Endothelial cell of umbilical vein (primary cell): ENCODE measurements at regions of chr11 and their contacts with region 1.

Region 1: GRCh38 chr11:59753650-59754493 is 1.3 kb upstream of the STX3 start:
- DNase-seq: peak; percentile 82
- H3K4me3 ChIP-seq: peak overlapping the region; percentile 65 to 87 (median 83)
- H3K27ac ChIP-seq: peak overlapping the region; percentile 72
- H3K4me1 ChIP-seq: peaks cover 21% of the 10 kb centered on the region
- H3K27me3 ChIP-seq: no peaks in the 10 kb centered on the region
- CTCF ChIP-seq: peak; percentile 82 to 89
- POLR2A ChIP-seq: no peak

Region 2: DNA sequence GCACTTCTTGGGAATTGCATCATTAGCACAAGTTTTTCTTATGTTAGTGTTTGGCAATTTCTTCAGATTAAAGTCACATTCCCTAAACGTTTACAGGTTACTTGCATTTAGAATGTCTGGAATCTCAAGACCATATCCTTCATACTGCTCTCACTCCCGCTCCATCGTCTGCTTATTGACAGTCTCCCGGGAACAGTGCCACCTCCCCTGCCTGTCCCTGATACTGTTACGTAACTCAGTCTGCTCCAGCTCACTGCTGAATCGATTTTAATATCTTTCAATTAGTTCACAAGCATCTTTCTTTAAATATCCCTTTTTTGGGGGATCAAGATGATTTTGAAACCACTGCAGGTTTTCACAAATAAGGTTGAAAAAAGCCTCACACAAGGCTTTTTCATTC is 957.5 kb before region 1 on chr11:
- CTCF ChIA-PET with region 1: no interaction called
- POLR2A ChIA-PET with region 1: no interaction called
- dilution Hi-C with region 1: no loop called
- intact Hi-C with region 1: no loop called
- DNase-seq: no peak
- H3K4me3 ChIP-seq: no peak overlapping the region
- H3K27ac ChIP-seq: no peak overlapping the region
- H3K4me1 ChIP-seq: no peaks in the 10 kb centered on the region
- H3K27me3 ChIP-seq: no peaks in the 10 kb centered on the region
- CTCF ChIP-seq: no peak
- POLR2A ChIP-seq: no peak

Region 3: DNA sequence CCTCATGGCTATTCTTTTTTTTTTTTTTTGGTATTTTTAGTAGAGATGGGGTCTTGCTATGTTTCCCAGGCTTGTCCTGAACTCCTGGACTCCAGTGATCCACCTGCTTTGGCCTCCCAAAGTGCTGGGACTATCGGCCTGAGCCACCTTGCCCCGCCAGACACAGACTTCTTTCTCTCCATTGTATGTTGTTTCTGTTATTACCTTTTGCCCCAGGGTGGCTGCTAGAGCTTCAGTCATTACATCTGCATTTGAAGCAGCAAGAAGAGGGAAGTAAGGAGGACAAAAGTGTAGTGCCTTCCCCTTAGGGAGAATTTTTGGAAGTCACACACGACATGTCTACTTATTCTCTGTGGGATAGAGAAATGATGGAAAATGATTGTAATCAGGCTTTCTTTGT is 128.2 kb before region 1 on chr11:
- CTCF ChIA-PET with region 1: no interaction called
- POLR2A ChIA-PET with region 1: no interaction called
- dilution Hi-C with region 1: no loop called
- intact Hi-C with region 1: no loop called
- DNase-seq: no peak
- H3K4me3 ChIP-seq: no peak overlapping the region
- H3K27ac ChIP-seq: no peak overlapping the region
- H3K4me1 ChIP-seq: no peaks in the 10 kb centered on the region
- H3K27me3 ChIP-seq: no peaks in the 10 kb centered on the region
- CTCF ChIP-seq: no peak
- POLR2A ChIP-seq: no peak

Region 4: DNA sequence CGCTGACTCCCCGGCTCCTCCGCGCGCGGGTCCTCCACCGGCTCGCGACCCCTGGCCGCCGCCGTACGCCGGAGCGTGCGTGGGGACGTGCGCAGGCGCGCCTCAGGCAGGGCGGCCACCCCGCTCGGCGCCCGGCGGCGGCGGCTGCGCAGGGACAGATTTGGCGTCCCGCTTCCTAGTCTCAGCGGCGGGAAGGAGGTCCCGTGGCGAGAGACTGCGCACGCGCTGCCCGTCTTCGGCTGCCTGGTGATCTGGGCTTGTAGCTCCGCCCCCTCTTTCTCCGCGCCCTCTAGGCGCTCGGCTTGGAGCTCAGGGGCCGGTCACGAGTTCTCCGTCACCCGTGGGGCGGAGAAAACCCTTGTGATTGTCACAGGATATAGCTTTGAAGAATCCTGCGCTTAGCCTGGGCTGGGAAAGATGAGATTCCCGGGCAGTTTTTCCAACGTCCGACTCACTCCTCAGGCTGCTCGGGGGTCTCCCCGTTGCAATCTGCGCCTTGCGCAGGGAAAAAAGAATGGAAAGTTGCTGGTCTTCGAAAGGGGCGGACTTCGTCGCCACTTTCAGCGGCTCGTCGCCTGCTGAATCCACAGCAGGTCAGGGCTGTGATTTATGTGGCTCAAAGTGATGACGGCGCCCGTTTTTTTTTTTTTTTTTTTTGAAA is 84.8 kb before region 1 on chr11 and contains the start of gene PATL1:
- CTCF ChIA-PET with region 1: interaction called, 8 read pairs
- POLR2A ChIA-PET with region 1: interaction called, 11 read pairs
- dilution Hi-C with region 1: no loop called
- intact Hi-C with region 1: loop called (anchors 1 kb)
- DNase-seq: peak; percentile 99
- H3K4me3 ChIP-seq: peak within 1 kb of the TSS; percentile 82 to 86 (median 82)
- H3K27ac ChIP-seq: peak within 1 kb of the TSS; percentile 97
- H3K4me1 ChIP-seq: peaks cover 18% of the 10 kb centered on the region
- H3K27me3 ChIP-seq: no peaks in the 10 kb centered on the region
- CTCF ChIP-seq: no peak
- POLR2A ChIP-seq: peak; percentile 95
- total RNA-seq, gene PATL1: 33.1 and 38.8 TPM in 2 replicates

Region 5: DNA sequence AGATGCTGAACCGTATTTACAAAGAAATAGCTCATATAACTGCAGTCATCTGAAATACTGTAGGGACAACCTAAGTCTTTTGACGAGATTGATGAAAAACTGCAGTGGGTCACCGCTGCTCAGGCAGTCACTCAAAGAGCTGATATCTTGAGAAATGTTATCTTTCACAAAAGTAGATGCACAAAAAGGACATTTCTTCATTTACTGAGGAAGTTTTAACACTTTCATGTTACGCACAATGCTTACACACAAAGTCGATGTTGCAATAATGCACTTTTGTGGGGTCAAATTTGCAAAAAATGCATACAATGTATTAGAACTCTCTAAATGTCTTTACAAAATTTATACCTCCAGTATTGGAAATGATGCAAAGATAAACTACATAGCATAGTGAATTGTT is 24.0 kb before region 1 on chr11:
- CTCF ChIA-PET with region 1: no interaction called
- POLR2A ChIA-PET with region 1: no interaction called
- dilution Hi-C with region 1: no loop called
- intact Hi-C with region 1: no loop called
- DNase-seq: no peak
- H3K4me3 ChIP-seq: no peak overlapping the region
- H3K27ac ChIP-seq: no peak overlapping the region
- H3K4me1 ChIP-seq: peaks cover 2% of the 10 kb centered on the region
- H3K27me3 ChIP-seq: no peaks in the 10 kb centered on the region
- CTCF ChIP-seq: no peak
- POLR2A ChIP-seq: no peak

Region 6: DNA sequence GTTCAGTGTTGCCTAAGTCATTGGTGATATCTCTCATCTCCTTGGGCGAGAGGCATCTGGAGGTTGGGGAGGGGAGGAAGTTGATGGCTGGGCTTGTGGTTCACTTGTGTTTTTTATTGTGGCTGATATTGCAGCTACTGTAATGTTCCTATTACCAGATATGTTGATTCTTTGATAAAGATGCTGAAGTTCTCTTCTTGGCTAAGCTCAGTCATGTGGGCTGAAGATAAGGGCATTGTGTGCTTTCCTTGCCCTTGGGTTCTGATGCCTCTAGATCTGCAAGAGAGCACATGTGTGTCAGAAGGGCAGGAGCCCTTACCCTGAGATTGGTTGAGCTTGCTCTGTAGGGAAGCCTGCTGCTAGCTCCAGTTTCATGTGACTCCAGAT is 13.3 kb after region 1 on chr11:
- CTCF ChIA-PET with region 1: interaction called, 19 read pairs
- POLR2A ChIA-PET with region 1: interaction called, 4 read pairs
- dilution Hi-C with region 1: no loop called
- intact Hi-C with region 1: no loop called
- DNase-seq: no peak
- H3K4me3 ChIP-seq: no peak overlapping the region
- H3K27ac ChIP-seq: no peak overlapping the region
- H3K4me1 ChIP-seq: peaks cover 9% of the 10 kb centered on the region
- H3K27me3 ChIP-seq: no peaks in the 10 kb centered on the region
- CTCF ChIP-seq: no peak
- POLR2A ChIP-seq: no peak

Region 7: DNA sequence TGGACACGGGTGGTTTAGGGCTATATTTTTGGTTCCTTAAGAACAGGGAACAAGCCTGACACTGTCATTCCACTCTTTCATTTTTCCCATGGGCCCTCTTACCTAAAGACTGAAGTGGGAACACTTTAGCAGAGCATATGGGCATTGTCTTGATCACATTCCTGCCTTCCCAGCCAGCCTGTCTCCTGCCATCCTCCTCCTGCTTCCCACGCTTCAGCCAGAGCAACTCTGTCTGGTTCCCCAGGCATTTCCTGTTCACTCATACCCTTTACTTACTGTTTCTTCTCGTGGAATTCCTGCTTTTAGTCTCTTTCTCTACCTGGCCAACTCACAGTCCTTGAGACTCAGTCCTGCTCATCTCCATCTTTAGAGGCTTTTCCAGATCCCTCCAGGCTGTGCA is 33.9 kb after region 1 on chr11:
- CTCF ChIA-PET with region 1: interaction called, 16 read pairs
- POLR2A ChIA-PET with region 1: interaction called, 6 read pairs
- dilution Hi-C with region 1: no loop called
- intact Hi-C with region 1: loop called (anchors 1 kb)
- DNase-seq: peak; percentile 84
- H3K4me3 ChIP-seq: no peak overlapping the region
- H3K27ac ChIP-seq: peak overlapping the region; percentile 86
- H3K4me1 ChIP-seq: peaks cover 27% of the 10 kb centered on the region
- H3K27me3 ChIP-seq: no peaks in the 10 kb centered on the region
- CTCF ChIP-seq: no peak
- POLR2A ChIP-seq: no peak

Region 8: DNA sequence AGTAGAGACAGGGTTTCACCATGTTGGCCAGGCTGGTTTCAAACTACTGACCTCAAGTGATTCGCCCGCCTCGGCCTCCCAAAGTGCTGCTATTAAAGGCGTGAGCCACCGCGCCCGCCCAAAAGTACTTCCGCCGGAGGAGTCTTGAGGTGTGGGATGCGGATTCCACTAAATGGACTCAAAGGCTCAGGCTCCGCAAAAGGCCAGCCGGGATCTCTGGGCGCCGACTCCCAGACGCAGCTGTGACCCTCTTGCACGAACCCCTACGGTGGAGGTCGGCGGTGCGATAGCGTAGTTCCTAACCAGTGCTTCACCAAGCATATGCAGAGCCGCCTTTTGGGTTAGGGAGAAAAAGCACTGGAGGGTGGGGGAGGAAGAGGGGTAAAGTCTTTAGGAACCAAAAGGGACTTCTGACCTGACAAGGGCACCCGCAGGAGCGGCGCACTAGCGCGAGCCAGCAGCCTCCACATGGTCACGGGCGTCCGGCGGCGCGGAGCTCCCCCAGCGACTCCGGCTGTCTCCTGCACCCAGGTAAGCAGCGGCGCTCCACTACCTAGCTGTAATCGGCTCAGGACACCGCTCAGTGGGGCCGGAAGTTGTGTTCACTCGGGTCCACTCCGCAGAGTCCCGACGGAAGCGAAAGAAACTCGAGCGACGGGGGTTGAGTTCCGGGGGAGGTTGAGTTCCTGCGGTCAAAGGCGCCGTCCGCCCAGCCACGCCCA is 56.5 kb after region 1 on chr11 and contains the start of gene MRPL16:
- CTCF ChIA-PET with region 1: interaction called, 29 read pairs
- POLR2A ChIA-PET with region 1: no interaction called
- dilution Hi-C with region 1: no loop called
- intact Hi-C with region 1: loop called (anchors 2 kb)
- DNase-seq: peak; percentile 76
- H3K4me3 ChIP-seq: peak within 1 kb of the TSS; percentile 69 to 79 (median 74)
- H3K27ac ChIP-seq: peak within 1 kb of the TSS; percentile 59
- H3K4me1 ChIP-seq: peaks cover 6% of the 10 kb centered on the region
- H3K27me3 ChIP-seq: no peaks in the 10 kb centered on the region
- CTCF ChIP-seq: no peak
- POLR2A ChIP-seq: peak; percentile 76
- total RNA-seq, gene MRPL16: 60.3 and 63.9 TPM in 2 replicates

Region 9: GRCh38 chr11:59918987-59919589 is 165.2 kb after region 1 on chr11:
- CTCF ChIA-PET with region 1: interaction called, 35 read pairs
- POLR2A ChIA-PET with region 1: interaction called, 4 read pairs
- dilution Hi-C with region 1: no loop called
- intact Hi-C with region 1: loop called (anchors 1 kb)
- DNase-seq: peak; percentile 72
- H3K4me3 ChIP-seq: no peak overlapping the region
- H3K27ac ChIP-seq: no peak overlapping the region
- H3K4me1 ChIP-seq: no peaks in the 10 kb centered on the region
- H3K27me3 ChIP-seq: no peaks in the 10 kb centered on the region
- CTCF ChIP-seq: peak; percentile 38 to 39
- POLR2A ChIP-seq: no peak

Region 10: DNA sequence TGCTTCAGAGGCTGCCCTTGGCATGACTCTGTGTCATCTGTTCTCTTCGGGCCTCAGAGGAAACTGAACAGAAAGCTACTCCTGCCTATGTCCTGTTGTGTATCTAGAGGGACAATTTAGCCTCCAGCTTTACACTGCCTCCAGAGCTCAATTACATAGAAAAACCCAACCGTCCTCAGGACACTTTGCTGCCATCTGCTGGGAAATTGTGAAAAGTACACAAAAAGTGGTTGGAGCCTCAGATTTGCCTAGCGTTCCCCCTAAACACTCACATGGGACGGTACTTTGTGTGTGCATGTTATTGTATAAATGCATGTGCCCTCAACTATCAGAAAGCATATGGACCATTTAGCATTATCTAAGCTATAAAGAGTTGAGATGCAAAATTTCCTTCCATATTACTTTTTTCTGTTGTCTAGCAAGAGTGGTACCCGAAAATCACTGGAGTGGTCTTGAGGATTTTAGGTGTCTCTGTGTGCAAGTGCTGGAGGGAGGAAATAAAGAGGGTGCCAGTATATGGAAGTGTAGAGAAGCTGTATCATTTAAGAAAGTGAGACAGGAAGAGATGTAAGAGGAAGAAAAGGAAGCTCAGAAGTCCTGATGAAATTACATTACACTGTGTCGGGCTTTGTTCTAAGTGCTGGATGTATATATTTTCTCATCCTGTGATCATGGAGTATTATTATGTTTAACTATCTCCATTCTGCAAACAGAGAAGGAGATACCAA is 497.8 kb after region 1 on chr11:
- CTCF ChIA-PET with region 1: interaction called, 10 read pairs
- POLR2A ChIA-PET with region 1: no interaction called
- dilution Hi-C with region 1: no loop called
- intact Hi-C with region 1: loop called (anchors 2 kb)
- DNase-seq: peak; percentile 89
- H3K4me3 ChIP-seq: no peak overlapping the region
- H3K27ac ChIP-seq: no peak overlapping the region
- H3K4me1 ChIP-seq: peaks cover 22% of the 10 kb centered on the region
- H3K27me3 ChIP-seq: peaks cover 0 to 3% of the 10 kb centered on the region in 2 experiments
- CTCF ChIP-seq: peak; percentile 43 to 58
- POLR2A ChIP-seq: no peak